ENCODE measurements at regions of chr15 and their contacts with region 1.

Region 1: GRCh38 chr15:92938387-92938786 is 38.3 kb downstream of the CHD2 start:
- DNase-seq: peak in 2 of 3 donors; percentile 42 to 51
- H3K4me3 ChIP-seq: no peak overlapping the region
- H3K27ac ChIP-seq: no peak overlapping the region
- H3K4me1 ChIP-seq: peaks cover 2 to 34% (median 11%) of the 10 kb centered on the region in 4 experiments
- H3K27me3 ChIP-seq: no peaks in the 10 kb centered on the region

Region 2: GRCh38 chr15:92625251-92625980 is 313.0 kb before region 1 on chr15:
- CTCF ChIA-PET with region 1: no interaction called
- POLR2A ChIA-PET with region 1: no interaction called
- DNase-seq: peak in 2 of 3 donors; percentile 35 to 57
- H3K4me3 ChIP-seq: no peak overlapping the region
- H3K27ac ChIP-seq: no peak overlapping the region
- H3K4me1 ChIP-seq: peaks cover 2 to 13% (median 3%) of the 10 kb centered on the region in 4 experiments
- H3K27me3 ChIP-seq: no peaks in the 10 kb centered on the region

Region 3: GRCh38 chr15:92899948-92900708 is 38.3 kb before region 1 on chr15 and contains the start of gene CHD2:
- CTCF ChIA-PET with region 1: no interaction called
- POLR2A ChIA-PET with region 1: no interaction called
- DNase-seq: peak; percentile 91 to 95 (median 93)
- H3K4me3 ChIP-seq: peak within 1 kb of the TSS; percentile 73 to 100 (median 92)
- H3K27ac ChIP-seq: peak within 1 kb of the TSS; percentile 99 to 100
- H3K4me1 ChIP-seq: peaks cover 12 to 27% (median 19%) of the 10 kb centered on the region in 4 experiments
- H3K27me3 ChIP-seq: no peaks in the 10 kb centered on the region

Region 4: DNA sequence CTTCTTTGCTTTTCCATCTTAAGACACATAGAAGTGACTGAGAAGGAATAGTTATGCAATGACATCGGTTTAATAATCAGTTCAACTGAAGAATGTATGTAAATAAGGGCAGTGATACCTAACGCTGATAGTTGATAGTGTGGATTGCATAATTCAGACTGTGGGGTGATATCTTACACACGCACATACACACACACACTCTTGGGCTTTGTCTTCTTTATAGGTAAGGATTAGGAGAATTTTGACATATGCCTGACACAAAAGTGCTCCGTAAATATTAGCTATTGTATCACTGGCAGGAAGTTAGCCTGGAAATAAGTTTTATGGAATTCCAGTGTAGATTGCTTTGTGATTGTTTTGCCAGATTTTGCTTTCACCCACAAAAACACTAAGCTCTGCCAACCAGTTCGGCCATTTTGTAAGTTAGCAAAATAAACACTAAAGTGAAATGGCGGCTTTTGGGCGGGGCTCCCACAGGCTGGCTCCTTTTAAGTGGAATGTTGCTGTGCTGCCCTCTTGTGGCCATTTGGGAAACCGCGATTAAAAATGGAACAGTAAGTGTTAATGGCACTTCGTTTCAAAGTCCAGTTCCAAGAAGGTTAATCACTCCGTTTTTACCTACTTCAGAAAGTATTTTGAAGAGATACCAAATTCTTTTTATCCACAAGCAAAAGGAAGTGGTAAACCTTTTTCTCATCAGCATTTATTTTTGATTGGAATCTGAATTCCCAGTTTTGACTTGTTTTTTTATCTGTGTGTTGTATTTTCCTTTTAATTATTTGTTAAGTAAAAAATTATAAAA is 20.6 kb before region 1 on chr15:
- CTCF ChIA-PET with region 1: interaction called, 11 read pairs
- POLR2A ChIA-PET with region 1: interaction called, 4 read pairs
- DNase-seq: peak; percentile 94 to 96 (median 94)
- H3K4me3 ChIP-seq: peak overlapping the region in 2 of 7 experiments; percentile 25 to 34
- H3K27ac ChIP-seq: peak overlapping the region in 1 of 2 experiments; percentile 52
- H3K4me1 ChIP-seq: peaks cover 26 to 64% (median 44%) of the 10 kb centered on the region in 4 experiments
- H3K27me3 ChIP-seq: no peaks in the 10 kb centered on the region

Region 5: GRCh38 chr15:92954578-92954977 is 16.2 kb after region 1 on chr15:
- CTCF ChIA-PET with region 1: interaction called, 21 read pairs
- POLR2A ChIA-PET with region 1: interaction called, 3 read pairs
- DNase-seq: peak; percentile 15 to 50 (median 49)
- H3K4me3 ChIP-seq: no peak overlapping the region
- H3K27ac ChIP-seq: no peak overlapping the region
- H3K4me1 ChIP-seq: no peaks in the 10 kb centered on the region
- H3K27me3 ChIP-seq: no peaks in the 10 kb centered on the region